PC-9 (cell line): ENCODE measurements at regions of chr5 and their contacts with region 1.

Region 1: DNA sequence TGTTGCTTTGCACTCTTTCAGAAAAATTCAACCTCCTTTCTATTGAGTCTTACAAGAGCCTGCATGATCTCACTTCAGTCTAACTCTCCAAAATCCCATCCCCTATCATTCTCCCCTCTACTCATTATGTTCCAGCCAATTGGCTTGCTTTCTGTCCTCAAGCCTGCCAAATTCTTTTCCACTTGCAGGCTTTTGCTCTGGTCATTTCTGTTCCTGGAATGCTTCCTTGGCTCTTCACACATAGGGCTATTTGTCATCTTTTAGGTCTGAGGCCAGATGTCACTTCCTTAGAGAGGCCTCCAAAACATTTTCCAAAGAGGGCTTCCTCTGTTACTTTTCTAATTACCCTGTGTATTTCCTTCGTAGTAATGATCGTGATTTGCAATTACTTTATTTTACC is 11.8 kb upstream of the CHD1 start:
- DNase-seq: no peak
- H3K4me3 ChIP-seq: no peak overlapping the region
- H3K27ac ChIP-seq: no peak overlapping the region
- H3K4me1 ChIP-seq: no peaks in the 10 kb centered on the region
- H3K27me3 ChIP-seq: no peaks in the 10 kb centered on the region
- CTCF ChIP-seq: no peak

Region 2: GRCh38 chr5:98483301-98483685 is 457.3 kb before region 1 on chr5:
- CTCF ChIA-PET with region 1: no interaction called
- POLR2A ChIA-PET with region 1: no interaction called
- intact Hi-C with region 1: no loop called
- DNase-seq: no peak
- H3K4me3 ChIP-seq: no peak overlapping the region
- H3K27ac ChIP-seq: no peak overlapping the region
- H3K4me1 ChIP-seq: no peaks in the 10 kb centered on the region
- H3K27me3 ChIP-seq: no peaks in the 10 kb centered on the region
- CTCF ChIP-seq: no peak

Region 3: DNA sequence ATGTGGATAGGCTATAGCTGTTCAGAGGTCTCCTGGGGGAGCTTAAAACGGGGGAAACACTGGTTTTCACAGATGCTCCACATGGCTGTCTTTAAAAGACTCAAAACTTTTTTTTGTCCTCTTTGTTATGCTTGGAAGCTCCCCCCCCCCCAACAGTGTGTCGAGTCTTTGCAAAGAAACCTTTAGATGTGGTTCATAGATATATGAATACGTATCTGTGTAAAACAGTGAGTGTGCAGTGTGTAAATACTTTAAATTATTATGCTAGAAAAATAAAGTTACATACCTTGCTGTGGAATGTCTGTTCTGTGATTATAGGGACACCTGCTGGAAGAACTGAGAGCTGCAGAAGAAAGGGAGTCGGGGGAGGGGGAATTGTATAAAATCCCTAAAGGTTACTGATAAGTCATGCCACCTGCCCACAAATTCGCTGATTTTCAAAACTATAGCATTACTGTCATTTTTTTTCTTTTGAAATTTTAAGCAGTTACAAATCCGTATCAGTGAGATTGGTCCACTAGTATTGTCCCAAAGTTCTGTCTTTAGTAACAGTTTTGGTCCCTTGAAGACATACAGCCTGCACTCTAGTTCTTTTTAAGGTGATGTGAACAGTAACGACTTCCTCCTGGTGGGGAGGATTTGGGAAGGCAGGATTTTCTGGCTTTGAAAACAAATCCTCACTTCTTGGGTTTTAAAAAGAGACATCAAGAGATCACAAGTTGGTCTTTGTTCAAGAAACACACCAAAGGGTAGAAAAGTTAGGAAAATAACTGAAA is 144.2 kb before region 1 on chr5:
- CTCF ChIA-PET with region 1: no interaction called
- POLR2A ChIA-PET with region 1: no interaction called
- intact Hi-C with region 1: no loop called
- DNase-seq: peak; percentile 49 to 62
- H3K4me3 ChIP-seq: no peak overlapping the region
- H3K27ac ChIP-seq: no peak overlapping the region
- H3K4me1 ChIP-seq: 0 out of 2 replicates have a peak, but pooled peaks cover 3% of the 10 kb centered on the region
- H3K27me3 ChIP-seq: no peaks in the 10 kb centered on the region
- CTCF ChIP-seq: peak; percentile 86

Region 4: GRCh38 chr5:98891591-98891990 is 49.0 kb before region 1 on chr5:
- CTCF ChIA-PET with region 1: interaction called, 12 read pairs
- POLR2A ChIA-PET with region 1: no interaction called
- intact Hi-C with region 1: no loop called
- DNase-seq: no peak
- H3K4me3 ChIP-seq: no peak overlapping the region
- H3K27ac ChIP-seq: no peak overlapping the region
- H3K4me1 ChIP-seq: no peaks in the 10 kb centered on the region
- H3K27me3 ChIP-seq: no peaks in the 10 kb centered on the region
- CTCF ChIP-seq: no peak